Activated T-helper 2 cell treated with anti-CD3 and anti-CD28 coated beads, Interferon-gamma antibody, Interleukin-2, Interleukin-4, amounts not matched to agents 10 μg/mL and 5 μg/mL and 100 μg/mL, durations not matched to agents 14 hours and 24 hours and 36 hours (primary cell): ENCODE measurements at regions of chr3 and their contacts with region 1.

Region 1: GRCh38 chr3:188788621-188789081 is 383.1 kb upstream of the TPRG1 start:
- DNase-seq: peak; percentile 42
- H3K4me3 Mint-ChIP-seq: no peak overlapping the region
- H3K27ac Mint-ChIP-seq: no peak overlapping the region
- H3K4me1 Mint-ChIP-seq: peaks cover 2% of the 10 kb centered on the region
- H3K27me3 Mint-ChIP-seq: no peaks in the 10 kb centered on the region

Region 2: GRCh38 chr3:188339410-188340295 is 449.0 kb before region 1 on chr3:
- intact Hi-C with region 1: loop called (anchors 10 kb)
- DNase-seq: peak; percentile 19
- H3K4me3 Mint-ChIP-seq: peak overlapping the region; percentile 66
- H3K27ac Mint-ChIP-seq: peak overlapping the region; percentile 89
- H3K4me1 Mint-ChIP-seq: peaks cover 29% of the 10 kb centered on the region
- H3K27me3 Mint-ChIP-seq: no peaks in the 10 kb centered on the region

Region 3: DNA sequence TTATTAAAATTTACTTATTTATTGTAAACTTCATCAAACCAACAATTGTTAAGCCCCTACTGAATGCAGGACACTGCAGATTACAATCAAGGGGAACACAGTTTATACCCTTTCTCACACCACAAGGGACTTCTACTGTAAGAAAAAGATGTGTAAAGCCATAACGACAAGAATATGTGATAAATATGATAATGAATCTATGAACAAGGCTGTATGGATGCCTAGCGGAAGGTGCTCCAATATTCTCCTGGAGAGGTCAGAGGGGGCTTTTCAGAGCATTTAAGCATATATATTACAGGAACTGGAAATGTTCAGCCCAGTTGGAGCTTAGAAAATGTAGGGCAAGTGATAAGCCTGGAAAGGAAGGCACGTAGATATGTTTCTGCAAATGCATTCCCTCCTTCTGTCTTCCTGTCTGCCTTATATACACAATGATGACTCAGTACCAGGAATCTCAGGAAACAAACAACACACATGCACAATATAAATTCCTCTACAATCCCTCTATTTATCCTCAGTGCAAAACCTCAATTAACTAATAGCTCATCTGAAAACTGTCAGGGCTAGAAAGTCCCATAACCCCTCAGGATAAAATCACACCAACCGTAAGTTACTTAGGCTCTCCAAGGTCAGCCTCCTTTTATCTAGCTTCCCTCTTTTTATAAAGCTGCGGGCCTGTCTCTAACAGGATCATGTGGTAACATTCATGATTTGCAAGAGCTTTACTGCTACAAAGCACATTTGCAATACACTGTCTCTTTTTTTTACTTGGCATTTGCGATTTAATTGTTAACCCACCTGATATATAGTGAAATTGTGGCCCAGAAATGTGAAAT is 241.6 kb before region 1 on chr3:
- intact Hi-C with region 1: no loop called
- DNase-seq: no peak
- H3K4me3 Mint-ChIP-seq: no peak overlapping the region
- H3K27ac Mint-ChIP-seq: no peak overlapping the region
- H3K4me1 Mint-ChIP-seq: peaks cover 2% of the 10 kb centered on the region
- H3K27me3 Mint-ChIP-seq: no peaks in the 10 kb centered on the region

Region 4: DNA sequence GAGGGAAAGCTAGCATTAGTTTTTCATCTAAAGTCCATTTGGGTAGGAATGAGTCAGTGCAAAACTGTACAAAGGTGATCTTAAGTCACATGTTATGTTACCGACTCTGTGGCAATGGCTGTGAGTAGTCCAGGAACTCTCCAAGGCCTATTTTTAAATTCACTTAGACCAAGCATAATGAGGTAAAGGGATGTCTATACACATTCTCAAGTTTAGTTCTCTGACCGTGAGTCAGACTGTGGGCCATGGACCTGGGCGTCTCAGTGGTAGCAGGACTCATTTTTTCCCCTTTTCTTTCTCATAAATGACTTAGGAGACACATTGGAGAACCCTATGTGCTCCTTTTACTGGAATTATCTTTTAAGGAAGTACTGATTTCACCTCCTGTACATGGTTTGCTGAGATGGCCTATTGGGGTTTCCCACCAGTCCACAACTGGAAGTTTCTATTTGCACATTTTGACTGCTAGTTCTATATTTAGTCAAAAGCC is 105.6 kb before region 1 on chr3:
- intact Hi-C with region 1: loop called (anchors 1 kb)
- DNase-seq: no peak
- H3K4me3 Mint-ChIP-seq: no peak overlapping the region
- H3K27ac Mint-ChIP-seq: peak overlapping the region; percentile 78
- H3K4me1 Mint-ChIP-seq: peaks cover 41% of the 10 kb centered on the region
- H3K27me3 Mint-ChIP-seq: no peaks in the 10 kb centered on the region

Region 5: DNA sequence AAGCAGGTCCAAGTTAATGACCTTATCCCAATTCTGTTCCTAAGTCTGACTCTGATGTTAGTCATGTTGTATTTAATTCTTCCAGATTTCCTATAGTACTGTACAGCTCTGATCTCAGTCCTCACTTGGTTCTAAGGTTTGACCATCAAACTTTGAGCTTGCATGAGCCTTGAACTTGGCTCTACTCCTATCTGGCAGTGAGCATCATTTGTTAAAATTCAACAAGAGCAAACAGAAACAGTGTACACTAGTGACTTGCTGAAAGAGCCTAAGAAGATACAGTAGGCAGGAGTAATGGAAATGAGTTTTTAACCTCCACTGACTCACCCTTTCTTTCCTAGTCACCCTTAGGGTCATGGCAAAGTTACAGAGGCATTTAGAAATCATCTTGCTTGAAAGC is 68.0 kb before region 1 on chr3:
- intact Hi-C with region 1: loop called (anchors 2 kb)
- DNase-seq: no peak
- H3K4me3 Mint-ChIP-seq: no peak overlapping the region
- H3K27ac Mint-ChIP-seq: no peak overlapping the region
- H3K4me1 Mint-ChIP-seq: peaks cover 27% of the 10 kb centered on the region
- H3K27me3 Mint-ChIP-seq: no peaks in the 10 kb centered on the region

Region 6: GRCh38 chr3:188817103-188817936 is 28.7 kb after region 1 on chr3:
- intact Hi-C with region 1: no loop called
- DNase-seq: no peak
- H3K4me3 Mint-ChIP-seq: no peak overlapping the region
- H3K27ac Mint-ChIP-seq: no peak overlapping the region
- H3K4me1 Mint-ChIP-seq: no peaks in the 10 kb centered on the region
- H3K27me3 Mint-ChIP-seq: peaks cover 4% of the 10 kb centered on the region

Region 7: DNA sequence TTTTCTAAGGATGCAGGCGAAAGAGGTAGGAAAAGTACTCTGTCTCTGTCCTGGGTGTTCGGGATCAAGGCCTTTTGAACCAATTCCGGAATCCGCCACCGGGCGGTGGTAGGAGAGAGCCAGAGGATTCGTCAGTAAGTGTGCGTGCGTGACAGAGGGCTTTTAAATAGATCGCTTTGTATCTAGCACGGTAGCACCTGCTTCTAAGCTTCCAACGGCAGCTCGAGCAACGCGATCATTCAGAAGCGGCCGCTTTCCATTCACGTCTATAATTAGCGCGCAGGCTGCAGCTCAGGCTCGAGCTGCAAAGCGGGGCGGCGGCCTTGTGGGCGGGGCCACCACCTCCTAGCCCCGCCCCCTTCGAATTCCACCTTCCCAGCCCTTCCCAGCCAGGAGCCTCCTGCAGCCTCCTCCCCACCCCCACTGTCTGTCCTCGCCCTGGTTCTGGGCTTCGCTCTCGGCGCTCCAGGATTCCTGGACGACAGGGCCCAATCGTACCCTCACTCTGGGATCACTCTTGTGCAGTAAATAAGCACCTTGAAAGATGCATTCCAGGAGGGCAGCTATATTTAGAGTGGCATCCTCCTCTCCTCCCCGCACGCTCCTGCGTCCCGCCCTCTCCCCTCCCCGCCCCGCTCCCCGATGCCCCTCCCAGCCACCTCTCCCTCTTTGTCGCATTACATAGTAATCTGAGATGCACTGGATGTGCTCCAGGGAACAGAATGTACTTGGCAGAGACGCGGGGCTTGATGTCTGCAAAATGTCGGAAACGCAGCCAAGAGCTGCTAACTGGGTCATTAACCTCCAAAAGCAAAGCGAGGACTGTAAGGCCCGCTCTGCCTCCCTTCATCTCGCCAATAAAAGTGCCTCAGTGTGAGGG is 159.0 kb after region 1 on chr3:
- intact Hi-C with region 1: loop called (anchors 1 kb)
- DNase-seq: no peak
- H3K4me3 Mint-ChIP-seq: no peak overlapping the region
- H3K27ac Mint-ChIP-seq: no peak overlapping the region
- H3K4me1 Mint-ChIP-seq: peaks cover 39% of the 10 kb centered on the region
- H3K27me3 Mint-ChIP-seq: peaks cover 18% of the 10 kb centered on the region

Region 8: DNA sequence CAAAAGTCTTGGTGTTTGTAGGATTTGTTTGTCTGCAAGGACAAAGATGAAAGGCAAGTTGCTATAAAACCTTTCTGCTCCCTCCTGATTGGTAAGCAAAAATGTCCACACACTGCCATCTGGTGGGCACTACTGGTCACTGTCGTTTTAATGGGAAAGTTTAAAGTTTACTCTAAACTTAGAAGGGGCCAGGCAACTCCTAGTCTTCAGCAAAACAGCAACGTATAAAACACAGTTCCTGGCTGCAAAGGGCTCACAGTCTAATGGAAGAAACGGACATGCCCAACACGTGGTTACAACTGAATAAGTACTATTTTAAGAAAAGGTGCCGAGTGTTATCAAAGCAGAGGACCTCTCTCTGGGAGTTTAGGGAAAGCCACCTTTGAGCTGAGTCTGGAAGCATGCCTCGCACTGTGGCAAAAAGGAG is 359.4 kb after region 1 on chr3:
- intact Hi-C with region 1: loop called (anchors 10 kb)
- DNase-seq: peak; percentile 52
- H3K4me3 Mint-ChIP-seq: no peak overlapping the region
- H3K27ac Mint-ChIP-seq: no peak overlapping the region
- H3K4me1 Mint-ChIP-seq: peaks cover 41% of the 10 kb centered on the region
- H3K27me3 Mint-ChIP-seq: peaks cover 7% of the 10 kb centered on the region